ENCODE measurements at regions of chr6 and their contacts with region 1.

Region 1: DNA sequence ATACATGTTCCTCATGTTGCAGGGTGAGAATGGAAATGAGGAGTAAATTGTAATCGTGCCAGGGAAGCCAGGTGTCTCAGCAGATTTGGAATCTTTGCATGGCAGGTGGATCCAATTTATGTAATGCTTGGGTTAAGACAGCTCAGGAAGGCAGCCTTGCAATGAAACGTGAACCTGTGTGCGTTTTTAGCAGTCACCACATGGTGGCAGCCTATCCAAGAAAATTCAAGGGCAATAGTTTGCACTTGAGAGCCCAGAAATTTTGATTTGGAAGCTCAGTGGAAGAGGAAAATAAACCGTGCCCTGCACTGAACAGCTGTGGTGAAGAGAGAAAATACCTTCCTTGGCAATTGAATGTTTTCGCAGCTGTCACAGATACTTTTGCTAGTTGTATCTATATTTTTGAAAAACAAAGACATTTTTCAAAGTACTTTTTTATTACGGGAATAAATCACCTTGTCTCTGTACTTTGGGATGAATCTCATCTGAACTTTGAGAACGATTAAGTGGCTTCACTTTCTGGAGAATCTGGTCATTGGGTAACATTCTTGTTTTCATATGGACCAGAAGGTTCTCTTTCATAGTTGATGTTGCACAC is 26.5 kb downstream of the MTHFD1L start:
- DNase-seq: peak; percentile 53
- H3K4me3 ChIP-seq: no peak overlapping the region; a peak in 1 of 4 replicates
- H3K27ac ChIP-seq: no peak overlapping the region
- H3K4me1 ChIP-seq: peaks cover 14% of the 10 kb centered on the region in 2 experiments; a peak in 2 of 4 replicates
- H3K27me3 ChIP-seq: no peaks in the 10 kb centered on the region
- CTCF ChIP-seq: peak; percentile 77
- EP300 ChIP-seq: no peak
- RAD21 ChIP-seq: peak; percentile 92

Region 2: GRCh38 chr6:150865406-150866146 is 26.4 kb before region 1 on chr6 and contains the start of gene MTHFD1L:
- CTCF ChIA-PET with region 1: interaction called, 35 read pairs
- POLR2A ChIA-PET with region 1: no interaction called
- DNase-seq: peak; percentile 93
- H3K4me3 ChIP-seq: peak within 1 kb of the TSS; percentile 64 to 75
- H3K27ac ChIP-seq: peak within 1 kb of the TSS; percentile 89 to 95
- H3K4me1 ChIP-seq: peaks cover 0 to 11% of the 10 kb centered on the region in 2 experiments; a peak in 2 of 4 replicates
- H3K27me3 ChIP-seq: no peaks in the 10 kb centered on the region
- CTCF ChIP-seq: peak; percentile 60
- EP300 ChIP-seq: no peak
- RAD21 ChIP-seq: 0 out of 2 replicates have a peak, but pooled peaks have one; percentile 14
- polyA plus RNA-seq, gene MTHFD1L: 36.7 and 37.0 TPM in 2 replicates

Region 3: GRCh38 chr6:150876598-150876997 is 15.4 kb before region 1 on chr6:
- CTCF ChIA-PET with region 1: interaction called, 19 read pairs
- POLR2A ChIA-PET with region 1: no interaction called
- DNase-seq: no peak
- H3K4me3 ChIP-seq: no peak overlapping the region
- H3K27ac ChIP-seq: no peak overlapping the region
- H3K4me1 ChIP-seq: peaks cover 1 to 5% of the 10 kb centered on the region in 2 experiments; a peak in 3 of 4 replicates
- H3K27me3 ChIP-seq: no peaks in the 10 kb centered on the region
- CTCF ChIP-seq: no peak
- EP300 ChIP-seq: no peak
- RAD21 ChIP-seq: no peak

Region 4: DNA sequence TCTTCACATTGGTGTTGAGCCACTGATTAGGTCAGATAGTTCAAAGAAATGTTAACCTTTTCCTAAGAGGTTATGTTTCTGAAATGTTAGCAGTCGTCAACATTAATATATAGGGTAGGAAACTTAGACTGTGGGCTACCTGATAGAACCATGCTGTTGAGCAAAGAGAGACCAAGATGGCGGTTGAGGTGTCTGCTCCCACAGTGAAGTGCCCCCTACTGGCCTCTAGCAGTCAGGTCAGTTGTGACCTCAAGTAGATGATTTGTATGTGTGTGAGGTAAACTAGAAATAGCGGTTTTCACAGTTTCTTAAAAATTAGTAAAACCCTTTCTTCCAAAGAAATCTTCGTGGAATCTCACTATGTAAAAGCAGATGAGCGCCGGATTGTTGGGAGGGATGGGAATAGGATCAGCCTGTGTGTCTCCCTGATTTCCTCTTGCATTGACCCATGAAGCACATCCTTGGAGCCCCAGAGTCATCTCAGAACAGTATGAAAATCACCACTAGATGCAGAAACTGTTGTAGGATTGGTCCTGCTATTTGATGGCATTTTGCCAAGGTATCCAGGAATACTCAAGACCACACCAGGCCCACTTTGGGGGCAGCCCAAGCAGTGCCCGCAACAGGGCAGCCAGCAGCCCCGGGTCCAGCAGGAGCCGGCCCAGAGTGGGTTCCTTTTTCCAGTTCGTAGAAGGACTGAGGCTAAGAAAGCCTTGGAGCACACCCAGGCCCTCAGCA is 14.0 kb after region 1 on chr6:
- CTCF ChIA-PET with region 1: interaction called, 16 read pairs
- POLR2A ChIA-PET with region 1: no interaction called
- DNase-seq: no peak
- H3K4me3 ChIP-seq: no peak overlapping the region
- H3K27ac ChIP-seq: peak overlapping the region in 1 of 2 experiments; percentile 50; a peak in 2 of 4 replicates
- H3K4me1 ChIP-seq: peaks cover 0 to 9% of the 10 kb centered on the region in 2 experiments; a peak in 1 of 4 replicates
- H3K27me3 ChIP-seq: no peaks in the 10 kb centered on the region
- CTCF ChIP-seq: peak; percentile 57
- EP300 ChIP-seq: no peak
- RAD21 ChIP-seq: no peak

Region 5: DNA sequence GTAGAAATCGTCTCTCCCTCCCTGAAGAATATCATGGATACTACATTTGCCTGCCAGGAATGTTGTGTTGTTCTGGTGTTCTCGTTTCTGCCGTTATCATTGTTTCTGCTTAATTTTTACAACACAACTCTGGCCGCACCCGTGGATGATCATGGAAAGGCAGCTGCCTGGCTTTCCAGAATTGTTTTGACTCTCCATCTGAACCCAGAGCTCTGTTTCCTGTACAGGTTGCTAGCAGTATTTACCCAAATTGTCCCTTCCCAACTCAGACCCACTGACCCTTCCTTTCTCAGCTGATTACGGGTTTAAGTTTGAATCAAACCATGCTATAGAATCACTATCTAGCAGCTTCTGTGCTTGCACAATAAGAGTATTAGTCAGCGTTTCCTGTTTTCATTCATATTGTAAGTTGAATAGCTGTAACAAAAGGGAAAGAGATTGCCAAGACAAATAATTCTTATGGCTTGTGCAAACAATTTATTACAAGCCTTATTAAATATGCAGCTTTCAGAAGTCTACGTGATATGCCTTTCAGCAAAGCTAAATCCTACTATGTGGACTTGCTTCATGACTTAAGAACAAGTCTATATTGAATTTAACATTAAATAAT is 112.5 kb after region 1 on chr6:
- CTCF ChIA-PET with region 1: interaction called, 26 read pairs
- POLR2A ChIA-PET with region 1: no interaction called
- DNase-seq: no peak
- H3K4me3 ChIP-seq: no peak overlapping the region
- H3K27ac ChIP-seq: peak overlapping the region; percentile 47 to 74; a peak in 3 of 4 replicates
- H3K4me1 ChIP-seq: peaks cover 3 to 23% of the 10 kb centered on the region in 2 experiments; a peak in 2 of 4 replicates
- H3K27me3 ChIP-seq: no peaks in the 10 kb centered on the region
- CTCF ChIP-seq: no peak
- EP300 ChIP-seq: peak; percentile 18 to 66; a peak in 1 of 4 replicates
- RAD21 ChIP-seq: no peak

Region 6: GRCh38 chr6:151229401-151230276 is 337.7 kb after region 1 on chr6:
- CTCF ChIA-PET with region 1: no interaction called
- POLR2A ChIA-PET with region 1: no interaction called
- DNase-seq: no peak
- H3K4me3 ChIP-seq: no peak overlapping the region
- H3K27ac ChIP-seq: no peak overlapping the region
- H3K4me1 ChIP-seq: no peaks in the 10 kb centered on the region
- H3K27me3 ChIP-seq: no peaks in the 10 kb centered on the region
- CTCF ChIP-seq: no peak
- EP300 ChIP-seq: no peak
- RAD21 ChIP-seq: no peak